ENCODE measurements at regions of chr15 and their contacts with region 1.

Region 1: GRCh38 chr15:98671060-98672008 is 23.0 kb downstream of the IGF1R start:
- DNase-seq: peak; percentile 95
- ATAC-seq: peak; percentile 82
- H3K4me3 ChIP-seq: peak overlapping the region; percentile 1 to 47 (median 32); a peak in 2 of 6 replicates
- H3K27ac ChIP-seq: peak overlapping the region; percentile 92
- H3K4me1 ChIP-seq: peaks cover 98% of the 10 kb centered on the region
- H3K27me3 ChIP-seq: no peaks in the 10 kb centered on the region
- CTCF ChIP-seq: no peak
- EP300 ChIP-seq: peak; percentile 66 to 86; a peak in 3 of 4 replicates
- POLR2A ChIP-seq: no peak
- RAD21 ChIP-seq: no peak

Region 2: DNA sequence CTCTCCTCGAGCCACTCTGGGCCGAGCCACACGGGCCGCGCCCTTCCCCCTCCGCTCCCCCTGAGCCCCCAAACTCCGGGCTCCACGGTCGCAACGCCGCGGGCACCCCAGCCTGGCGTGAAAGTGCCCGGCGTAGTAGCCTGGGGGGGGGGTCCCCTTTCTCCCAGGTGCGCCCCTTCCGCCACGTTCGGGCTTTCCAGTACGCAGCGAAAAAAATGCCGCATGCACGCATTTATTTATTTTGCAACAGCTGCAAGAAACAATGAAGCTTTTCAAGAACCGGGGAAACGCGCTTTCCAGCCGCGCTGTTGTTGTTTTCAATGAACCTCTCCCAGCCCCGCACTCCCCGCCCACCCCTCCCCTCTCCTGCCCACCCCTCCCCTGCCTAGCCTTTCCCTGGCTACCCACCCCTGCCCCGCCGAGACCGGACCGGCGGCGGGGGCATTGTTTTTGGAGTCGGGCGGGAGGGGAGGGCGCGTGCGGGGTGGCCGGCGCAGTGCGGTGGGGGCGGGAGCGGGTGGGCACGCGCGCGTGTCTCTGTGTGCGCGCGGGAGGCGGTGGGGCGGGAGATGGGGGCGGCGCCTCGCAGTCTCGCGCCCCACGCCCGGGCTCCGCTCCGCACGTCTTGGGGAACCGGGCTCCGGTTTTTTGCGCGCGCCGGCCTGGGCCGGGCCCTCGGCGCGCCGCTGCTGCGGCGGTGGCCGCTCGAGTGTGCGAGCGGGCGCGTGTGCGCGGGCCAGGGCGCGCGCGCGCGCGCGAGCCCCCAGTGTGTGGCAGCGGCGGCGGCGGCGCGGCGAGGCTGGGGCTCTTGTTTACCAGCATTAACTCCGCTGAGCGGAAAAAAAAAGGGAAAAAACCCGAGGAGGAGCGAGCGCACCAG is 23.3 kb before region 1 on chr15 and contains the start of gene IGF1R:
- CTCF ChIA-PET with region 1: no interaction called
- POLR2A ChIA-PET with region 1: interaction called, 10 read pairs
- in situ Hi-C with region 1: no loop called
- intact Hi-C with region 1: no loop called
- DNase-seq: peak; percentile 80
- ATAC-seq: peak; percentile 20
- H3K4me3 ChIP-seq: peak within 1 kb of the TSS; percentile 83 to 94 (median 91)
- H3K27ac ChIP-seq: peak within 1 kb of the TSS; percentile 85
- H3K4me1 ChIP-seq: peaks cover 22% of the 10 kb centered on the region
- H3K27me3 ChIP-seq: peaks cover 1 to 24% of the 10 kb centered on the region in 2 experiments
- CTCF ChIP-seq: no peak
- EP300 ChIP-seq: no peak
- POLR2A ChIP-seq: no peak; a peak in 1 of 4 replicates
- RAD21 ChIP-seq: peak; percentile 46; the same call in 1 of the 2 replicates
- total RNA-seq, gene IGF1R: 12.0 and 15.9 TPM in 2 replicates

Region 3: GRCh38 chr15:98692213-98692612 is 20.9 kb after region 1 on chr15:
- CTCF ChIA-PET with region 1: no interaction called
- POLR2A ChIA-PET with region 1: interaction called, 10 read pairs
- in situ Hi-C with region 1: no loop called
- intact Hi-C with region 1: no loop called
- DNase-seq: peak; percentile 78
- ATAC-seq: peak; percentile 83
- H3K4me3 ChIP-seq: no peak overlapping the region; a peak in 1 of 6 replicates
- H3K27ac ChIP-seq: peak overlapping the region; percentile 49
- H3K4me1 ChIP-seq: peaks cover 77% of the 10 kb centered on the region
- H3K27me3 ChIP-seq: no peaks in the 10 kb centered on the region
- CTCF ChIP-seq: no peak
- EP300 ChIP-seq: peak in 1 of 2 experiments; percentile 74; a peak in 2 of 4 replicates
- POLR2A ChIP-seq: no peak
- RAD21 ChIP-seq: no peak

Region 4: DNA sequence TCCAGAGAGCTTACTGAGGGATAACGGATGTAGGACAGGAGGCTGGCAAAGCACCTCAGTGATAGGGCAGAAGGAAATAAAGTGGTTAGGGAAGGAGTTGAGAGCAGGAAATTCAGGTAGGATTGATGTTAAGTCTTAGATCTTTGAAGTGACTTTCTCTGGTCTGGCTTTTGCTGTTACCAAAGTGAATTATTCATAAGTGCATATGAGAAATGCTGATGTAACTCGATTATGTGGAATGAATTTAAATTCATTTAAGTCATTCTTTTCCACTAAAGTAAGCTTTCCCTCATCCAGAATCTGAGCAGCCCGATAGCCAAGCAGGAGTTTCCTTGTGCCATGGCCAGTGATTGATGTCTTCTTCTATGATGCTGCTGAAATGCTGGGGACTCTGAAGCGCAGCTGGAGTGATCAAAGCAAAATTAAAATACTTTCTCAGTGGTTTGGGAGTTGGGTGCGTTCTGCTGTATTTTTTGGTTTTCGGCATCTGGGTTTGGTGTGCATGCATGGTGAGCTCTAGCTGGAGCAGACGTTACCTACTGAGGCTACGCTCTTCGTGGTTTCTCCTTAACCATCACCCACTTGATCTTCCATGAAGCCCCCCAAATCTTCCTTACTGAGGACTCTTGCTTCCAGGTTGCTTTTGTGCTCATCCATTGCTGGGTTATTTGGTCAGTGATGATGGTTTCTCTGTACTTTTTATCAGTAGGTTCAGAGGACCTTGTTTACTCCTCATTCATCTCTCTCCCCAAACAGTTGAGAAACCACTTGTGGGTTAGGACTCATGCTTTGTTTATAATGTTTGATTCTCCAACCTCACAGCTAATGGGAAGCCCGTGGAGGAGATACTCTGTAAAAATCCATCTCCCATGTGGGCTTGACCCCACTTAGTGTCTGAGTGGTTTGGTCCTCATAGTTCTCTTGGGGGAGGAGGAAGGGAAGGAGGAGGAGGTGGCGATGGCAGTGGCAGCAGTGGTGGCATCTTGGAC is 49.5 kb after region 1 on chr15:
- CTCF ChIA-PET with region 1: no interaction called
- POLR2A ChIA-PET with region 1: interaction called, 12 read pairs
- in situ Hi-C with region 1: no loop called
- intact Hi-C with region 1: loop called (anchors 1 kb)
- DNase-seq: no peak
- ATAC-seq: no peak
- H3K4me3 ChIP-seq: no peak overlapping the region
- H3K27ac ChIP-seq: no peak overlapping the region
- H3K4me1 ChIP-seq: peaks cover 89% of the 10 kb centered on the region
- H3K27me3 ChIP-seq: no peaks in the 10 kb centered on the region
- CTCF ChIP-seq: no peak
- EP300 ChIP-seq: no peak
- POLR2A ChIP-seq: no peak
- RAD21 ChIP-seq: no peak

Region 5: DNA sequence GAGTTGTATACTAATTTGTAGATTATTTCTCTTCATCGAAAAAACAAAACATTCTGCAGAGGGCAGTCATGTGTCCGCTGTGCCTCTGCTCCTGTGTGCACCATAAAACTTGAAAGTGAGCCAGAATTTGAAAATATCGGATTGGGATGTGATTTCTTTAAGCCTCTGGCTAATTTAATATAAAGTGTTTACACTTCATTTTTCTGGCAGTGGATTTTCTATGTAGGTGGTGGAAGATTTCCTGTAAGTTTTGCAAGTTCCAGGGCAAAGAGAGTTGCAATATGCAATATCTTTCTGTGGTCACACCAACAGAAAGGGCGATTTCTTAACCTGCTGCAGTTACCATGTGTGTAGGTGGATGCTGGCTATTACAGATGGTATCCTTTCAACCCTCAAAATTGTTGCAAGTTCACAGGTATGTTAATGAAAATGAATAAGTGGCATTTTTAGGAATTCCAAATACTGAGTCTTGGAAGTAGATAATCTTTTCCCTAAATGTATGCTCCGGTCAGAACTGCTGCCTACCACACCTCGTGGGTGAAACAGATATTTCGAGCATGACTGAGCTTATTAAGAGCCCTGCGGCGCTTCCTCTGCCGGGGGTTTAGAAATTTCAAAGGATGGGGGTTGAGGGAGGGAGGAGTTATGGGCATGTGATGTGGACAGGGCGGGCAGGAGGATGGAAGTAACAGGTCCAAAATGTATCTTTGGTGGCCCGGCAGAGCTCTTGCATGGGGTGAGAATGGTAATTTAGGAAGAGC is 202.3 kb after region 1 on chr15:
- CTCF ChIA-PET with region 1: no interaction called
- POLR2A ChIA-PET with region 1: no interaction called
- in situ Hi-C with region 1: no loop called
- intact Hi-C with region 1: no loop called
- DNase-seq: no peak
- ATAC-seq: no peak
- H3K4me3 ChIP-seq: no peak overlapping the region
- H3K27ac ChIP-seq: no peak overlapping the region
- H3K4me1 ChIP-seq: peaks cover 39% of the 10 kb centered on the region
- H3K27me3 ChIP-seq: no peaks in the 10 kb centered on the region
- CTCF ChIP-seq: no peak
- EP300 ChIP-seq: no peak
- POLR2A ChIP-seq: no peak
- RAD21 ChIP-seq: no peak

Measured in HepG2 (cell line).